Right lobe of liver (tissue), 6 donors: ENCODE measurements at regions of chr5 and their contacts with region 1.

Region 1: GRCh38 chr5:178163772-178164735 is 10.4 kb upstream of the NHP2 start:
- DNase-seq: peak; percentile 86 to 88 (median 86)
- ATAC-seq: peak; percentile 100
- H3K4me3 ChIP-seq: no peak overlapping the region
- H3K27ac ChIP-seq: no peak overlapping the region
- H3K4me1 ChIP-seq: peaks cover 0 to 7% (median 0%) of the 10 kb centered on the region in 4 donors
- H3K27me3 ChIP-seq: no peaks in the 10 kb centered on the region
- CTCF ChIP-seq: peak; percentile 97 to 99 (median 98)
- POLR2A ChIP-seq: no peak

Region 2: DNA sequence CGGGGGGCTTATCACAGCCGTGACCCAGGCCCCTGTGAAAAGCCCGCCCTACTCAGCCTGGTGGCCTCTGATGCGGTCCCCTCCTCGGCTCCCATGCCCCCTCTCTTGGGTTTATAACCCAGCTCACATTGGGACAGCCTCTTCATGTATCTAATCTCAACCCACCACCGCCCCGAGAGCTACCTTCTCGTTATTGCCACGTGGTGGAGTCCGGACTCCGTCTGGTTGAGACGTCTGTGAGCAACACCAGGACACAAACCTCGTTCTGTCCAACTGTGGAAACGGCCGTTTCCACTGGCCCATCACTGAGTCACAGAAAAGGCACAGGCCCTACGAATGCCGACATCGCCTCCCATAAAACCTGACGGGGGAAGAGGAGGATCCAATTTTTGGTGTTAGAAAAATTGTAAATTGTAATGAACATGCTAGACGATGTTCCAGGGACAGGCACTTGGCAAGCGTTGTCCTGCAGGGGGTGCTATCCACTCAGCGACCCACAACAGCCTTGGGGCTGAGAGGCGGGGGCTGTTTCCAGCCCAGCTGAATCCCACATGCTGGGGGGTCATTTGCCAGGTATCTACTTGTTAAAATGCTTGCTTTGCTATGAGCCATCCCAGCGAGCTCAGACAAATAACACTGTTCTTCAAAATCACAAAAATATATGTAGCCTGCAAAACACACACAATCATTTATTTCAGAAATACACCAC is 88.1 kb before region 1 on chr5:
- intact Hi-C with region 1: loop called (anchors 5 to 10 kb)
- DNase-seq: peak; percentile 59 to 67 (median 59)
- ATAC-seq: peak; percentile 83 to 92 (median 86)
- H3K4me3 ChIP-seq: no peak overlapping the region
- H3K27ac ChIP-seq: no peak overlapping the region
- H3K4me1 ChIP-seq: no peaks in the 10 kb centered on the region
- H3K27me3 ChIP-seq: no peaks in the 10 kb centered on the region
- CTCF ChIP-seq: peak; percentile 75 to 90 (median 86)
- POLR2A ChIP-seq: no peak